Ovary (tissue), 10 donors: ENCODE measurements at regions of chr12 and their contacts with region 1.

Region 1: DNA sequence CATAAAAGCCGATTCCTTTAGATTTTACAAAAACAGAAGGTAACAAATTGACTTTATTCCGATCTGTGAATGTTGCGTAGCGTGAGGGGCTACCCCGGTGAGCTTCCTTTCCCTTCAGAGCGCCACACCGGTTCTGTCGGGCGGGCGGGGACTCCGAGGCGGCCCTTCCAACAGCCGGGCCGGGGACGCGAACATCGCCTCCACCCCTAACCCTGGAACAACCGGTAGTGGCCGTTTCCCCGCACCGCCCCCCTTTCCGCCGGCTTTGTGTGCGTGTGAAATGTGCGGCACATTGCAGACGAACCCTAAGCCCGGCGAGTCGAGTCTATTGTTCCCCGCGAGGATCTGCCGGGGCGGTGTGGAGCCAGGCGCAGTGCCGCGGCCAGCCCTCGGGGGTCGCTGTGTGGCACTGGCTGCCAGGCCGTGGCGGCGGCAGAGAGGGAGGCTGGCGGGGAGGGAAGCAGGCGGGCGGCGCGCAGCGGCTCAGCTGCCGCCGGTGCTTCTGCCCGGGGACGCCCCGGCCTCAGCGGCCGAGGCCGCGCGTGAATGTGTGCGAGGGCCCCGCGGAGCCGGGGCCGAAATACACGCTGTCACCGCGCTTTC is 775 bp upstream of the ARID2 start:
- DNase-seq: peak; percentile 95 to 96 (median 96)
- H3K4me3 ChIP-seq: peak overlapping the region; percentile 82
- H3K27ac ChIP-seq: peak overlapping the region; percentile 99 to 100
- H3K4me1 ChIP-seq: peaks cover 2% of the 10 kb centered on the region
- H3K27me3 ChIP-seq: no peaks in the 10 kb centered on the region
- CTCF ChIP-seq: peak; percentile 97 to 99 (median 98)
- EP300 ChIP-seq: no peak
- POLR2A ChIP-seq: peak; percentile 90

Region 2: GRCh38 chr12:45215419-45216229 is 513.1 kb before region 1 on chr12 and contains the start of gene ANO6:
- intact Hi-C with region 1: loop called in 1 of 4 experiments (anchors 1 kb)
- DNase-seq: peak; percentile 81 to 90 (median 85)
- H3K4me3 ChIP-seq: peak within 1 kb of the TSS; percentile 88
- H3K27ac ChIP-seq: peak within 1 kb of the TSS; percentile 93 to 94
- H3K4me1 ChIP-seq: peaks cover 11% of the 10 kb centered on the region
- H3K27me3 ChIP-seq: no peaks in the 10 kb centered on the region
- CTCF ChIP-seq: no peak
- EP300 ChIP-seq: no peak
- POLR2A ChIP-seq: peak; percentile 63
- total RNA-seq, gene ANO6: 52.8 to 83.0 (median 63.2) TPM

Region 3: DNA sequence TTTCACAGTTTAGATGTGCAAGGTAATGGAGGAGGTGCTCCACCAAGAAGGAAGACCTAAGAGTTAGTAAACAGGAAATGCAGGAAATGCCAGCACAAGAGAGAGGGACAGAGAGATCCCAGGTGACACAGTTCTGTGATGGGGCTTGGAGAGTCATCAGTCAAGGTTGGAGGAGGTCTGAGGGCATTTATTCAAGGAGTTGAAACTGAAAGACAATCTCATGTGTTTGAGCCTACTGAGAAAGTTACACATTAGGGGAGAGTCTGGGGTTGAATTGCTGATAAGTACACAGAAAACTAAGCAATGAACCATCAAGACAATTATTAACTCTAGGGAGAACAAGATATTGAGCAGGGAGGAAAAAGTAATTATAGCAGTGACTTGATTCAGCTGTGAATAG is 374.3 kb before region 1 on chr12:
- intact Hi-C with region 1: loop called in 1 of 4 experiments (anchors 10 kb)
- DNase-seq: no peak
- H3K4me3 ChIP-seq: no peak overlapping the region
- H3K27ac ChIP-seq: peak overlapping the region in 1 of 2 donors; percentile 55
- H3K4me1 ChIP-seq: peaks cover 32% of the 10 kb centered on the region
- H3K27me3 ChIP-seq: no peaks in the 10 kb centered on the region
- CTCF ChIP-seq: no peak
- EP300 ChIP-seq: no peak
- POLR2A ChIP-seq: no peak

Region 4: DNA sequence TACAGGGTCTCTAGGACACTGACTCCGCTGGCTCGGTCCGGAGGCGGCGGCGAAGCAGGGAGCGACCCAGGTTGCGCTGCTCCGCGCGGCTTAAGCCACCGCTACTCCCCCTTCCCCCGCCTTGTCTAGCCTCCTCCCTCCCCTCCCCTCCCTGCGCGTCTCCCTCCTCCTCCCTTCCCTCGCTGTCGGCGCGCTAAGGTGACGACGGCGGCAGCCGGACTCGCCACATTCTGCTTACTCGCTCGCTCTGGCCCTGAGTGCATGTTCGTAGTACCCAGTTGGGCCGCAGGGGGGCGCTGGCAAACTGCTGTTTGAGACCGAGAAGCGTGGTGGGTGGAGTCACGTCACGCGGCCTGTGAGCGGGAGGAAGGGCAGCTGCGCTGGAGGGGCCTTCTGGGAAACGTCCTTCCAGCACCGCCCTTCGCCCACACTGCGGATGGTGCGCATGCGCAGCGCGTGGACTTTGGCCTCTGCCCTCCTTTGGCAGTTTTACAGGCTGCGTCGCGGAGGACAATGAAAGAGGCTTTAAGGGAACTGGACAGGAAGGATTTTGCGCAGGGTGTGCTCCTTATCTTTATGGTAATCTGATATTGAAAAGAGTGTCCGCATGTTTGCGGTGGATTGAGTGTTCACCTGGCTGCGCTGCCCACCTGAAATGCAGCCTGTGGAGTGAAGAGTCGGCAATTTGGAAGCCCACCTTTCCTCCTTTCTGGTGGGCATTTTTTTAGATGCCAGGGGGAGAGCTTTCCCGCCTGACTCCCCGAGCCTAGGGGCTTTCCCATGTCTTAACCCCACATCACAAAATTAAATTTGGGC is 261.9 kb after region 1 on chr12 and contains the start of gene SCAF11:
- intact Hi-C with region 1: loop called in 2 of 4 experiments (anchors 2 kb)
- DNase-seq: peak; percentile 100
- H3K4me3 ChIP-seq: peak within 1 kb of the TSS; percentile 82
- H3K27ac ChIP-seq: peak within 1 kb of the TSS; percentile 91 to 97
- H3K4me1 ChIP-seq: peaks cover 7% of the 10 kb centered on the region
- H3K27me3 ChIP-seq: no peaks in the 10 kb centered on the region
- CTCF ChIP-seq: peak; percentile 93 to 99 (median 99)
- EP300 ChIP-seq: no peak
- POLR2A ChIP-seq: peak; percentile 90
- total RNA-seq, gene SCAF11: 91.8 to 149 (median 97.7) TPM